ENCODE measurements at regions of chr1 and their contacts with region 1.

Region 1: DNA sequence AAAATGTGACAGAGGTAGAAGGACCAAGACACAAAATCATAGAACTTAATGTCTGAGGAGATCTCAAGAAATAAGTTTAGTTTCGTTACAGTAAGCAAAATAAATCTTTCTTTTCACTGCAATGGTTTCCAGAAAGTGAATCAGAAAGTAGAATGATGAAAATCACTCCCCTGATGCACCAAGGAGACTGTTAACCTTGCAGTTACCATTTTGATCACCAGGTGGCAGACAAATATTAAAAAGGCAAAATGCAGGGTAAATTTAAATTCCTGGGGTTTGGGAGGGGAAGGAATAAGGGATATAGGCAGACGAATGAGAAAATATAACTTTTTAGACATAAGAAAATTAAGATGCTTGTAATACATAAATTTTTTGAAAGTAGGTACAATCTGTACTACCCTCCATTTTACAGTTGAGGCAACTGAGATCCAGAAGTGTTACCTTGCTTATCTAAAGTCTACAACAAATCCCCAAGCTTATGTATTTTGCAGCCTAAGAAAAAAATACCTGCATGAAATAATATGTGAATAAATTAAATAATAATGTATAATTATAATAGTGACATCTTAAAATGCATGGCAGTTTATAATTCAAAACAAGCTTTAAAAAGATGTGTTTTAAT is 253.2 kb downstream of the CRB1 start:
- DNase-seq: peak in 4 of 14 experiments; percentile 5 to 57 (median 50)
- ATAC-seq: peak; percentile 52
- H3K4me3 ChIP-seq: no peak overlapping the region
- H3K4me3 Mint-ChIP-seq: no peak overlapping the region
- H3K27ac ChIP-seq: no peak overlapping the region
- H3K27ac Mint-ChIP-seq: no peak overlapping the region
- H3K4me1 ChIP-seq: no peaks in the 10 kb centered on the region
- H3K4me1 Mint-ChIP-seq: no peaks in the 10 kb centered on the region
- H3K27me3 ChIP-seq: no peaks in the 10 kb centered on the region
- H3K27me3 Mint-ChIP-seq: no peaks in the 10 kb centered on the region
- CTCF ChIP-seq: peak; percentile 85

Region 2: GRCh38 chr1:197180252-197180878 is 340.9 kb before region 1 on chr1:
- CTCF ChIA-PET with region 1: no interaction called
- POLR2A ChIA-PET with region 1: no interaction called
- intact Hi-C with region 1: loop called in 1 of 2 experiments (anchors 10 kb)
- DNase-seq: peak in 3 of 14 experiments; percentile 48 to 56 (median 51)
- ATAC-seq: peak; percentile 59
- H3K4me3 ChIP-seq: no peak overlapping the region
- H3K4me3 Mint-ChIP-seq: no peak overlapping the region
- H3K27ac ChIP-seq: no peak overlapping the region
- H3K27ac Mint-ChIP-seq: no peak overlapping the region
- H3K4me1 ChIP-seq: no peaks in the 10 kb centered on the region
- H3K4me1 Mint-ChIP-seq: peaks cover 16% of the 10 kb centered on the region
- H3K27me3 ChIP-seq: no peaks in the 10 kb centered on the region
- H3K27me3 Mint-ChIP-seq: no peaks in the 10 kb centered on the region
- CTCF ChIP-seq: peak; percentile 77

Region 3: GRCh38 chr1:197327776-197328364 is 193.4 kb before region 1 on chr1:
- CTCF ChIA-PET with region 1: no interaction called
- POLR2A ChIA-PET with region 1: no interaction called
- intact Hi-C with region 1: loop called (anchors 5 to 10 kb)
- DNase-seq: peak in 2 of 14 experiments; percentile 2 to 9
- ATAC-seq: no peak
- H3K4me3 ChIP-seq: no peak overlapping the region
- H3K4me3 Mint-ChIP-seq: no peak overlapping the region
- H3K27ac ChIP-seq: no peak overlapping the region
- H3K27ac Mint-ChIP-seq: no peak overlapping the region
- H3K4me1 ChIP-seq: no peaks in the 10 kb centered on the region
- H3K4me1 Mint-ChIP-seq: no peaks in the 10 kb centered on the region
- H3K27me3 ChIP-seq: no peaks in the 10 kb centered on the region
- H3K27me3 Mint-ChIP-seq: no peaks in the 10 kb centered on the region
- CTCF ChIP-seq: peak; percentile 69